SK-N-SH (cell line): ENCODE measurements at regions of chr2 and their contacts with region 1.

Region 1: DNA sequence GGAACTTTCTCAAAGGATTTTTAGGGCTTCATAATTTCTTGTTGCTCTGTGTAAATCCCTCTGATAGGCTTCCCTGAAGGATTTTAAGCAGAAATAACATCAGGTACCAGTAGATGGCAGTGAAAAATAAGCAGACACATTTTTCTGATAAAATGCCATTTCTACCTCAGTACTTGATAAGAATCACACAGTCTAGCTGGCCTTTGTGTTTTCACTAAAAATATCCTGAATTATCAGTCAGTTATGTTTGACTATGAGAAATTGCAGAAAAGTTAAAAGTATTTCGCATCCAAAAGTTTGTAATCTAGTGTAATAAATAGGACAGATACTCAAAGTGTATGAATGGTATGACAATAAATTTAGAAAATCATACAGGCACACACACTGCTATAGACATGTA is 68.7 kb downstream of the DNAJC10 start:
- DNase-seq: peak; percentile 37
- H3K4me3 ChIP-seq: no peak overlapping the region; a peak in 1 of 4 replicates
- H3K27ac ChIP-seq: no peak overlapping the region
- H3K4me1 ChIP-seq: peaks cover 0 to 4% of the 10 kb centered on the region in 2 experiments; a peak in 1 of 4 replicates
- H3K27me3 ChIP-seq: no peaks in the 10 kb centered on the region
- CTCF ChIP-seq: peak; percentile 77
- EP300 ChIP-seq: no peak
- RAD21 ChIP-seq: peak; percentile 92

Region 2: GRCh38 chr2:182763311-182763912 is 21.4 kb before region 1 on chr2:
- CTCF ChIA-PET with region 1: interaction called, 16 read pairs
- POLR2A ChIA-PET with region 1: no interaction called
- DNase-seq: peak; percentile 19
- H3K4me3 ChIP-seq: no peak overlapping the region
- H3K27ac ChIP-seq: no peak overlapping the region
- H3K4me1 ChIP-seq: no peaks in the 10 kb centered on the region
- H3K27me3 ChIP-seq: no peaks in the 10 kb centered on the region
- CTCF ChIP-seq: peak; percentile 65
- EP300 ChIP-seq: no peak
- RAD21 ChIP-seq: peak; percentile 55

Region 3: DNA sequence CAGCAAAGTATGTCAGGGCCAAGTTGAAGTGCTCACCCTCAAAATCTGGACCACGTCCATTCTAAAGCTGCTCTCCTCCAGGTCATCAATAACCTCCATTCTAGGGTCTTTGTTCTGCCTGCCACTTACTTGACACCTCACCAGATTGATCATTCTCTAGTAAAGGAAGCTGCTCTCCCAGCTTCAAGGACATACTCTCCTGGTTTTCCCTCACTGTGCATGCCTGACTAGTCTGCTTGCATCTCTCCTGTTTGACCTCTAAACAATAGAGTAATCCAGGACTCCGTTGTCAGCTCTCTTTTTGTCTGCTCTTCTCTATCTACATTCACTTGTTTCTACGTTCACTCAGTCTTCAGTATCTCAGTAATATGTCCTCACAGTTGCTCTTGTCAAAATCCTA is 22.5 kb after region 1 on chr2:
- CTCF ChIA-PET with region 1: interaction called, 19 read pairs
- POLR2A ChIA-PET with region 1: no interaction called
- DNase-seq: no peak
- H3K4me3 ChIP-seq: no peak overlapping the region
- H3K27ac ChIP-seq: no peak overlapping the region
- H3K4me1 ChIP-seq: no peaks in the 10 kb centered on the region
- H3K27me3 ChIP-seq: no peaks in the 10 kb centered on the region
- CTCF ChIP-seq: no peak
- EP300 ChIP-seq: no peak
- RAD21 ChIP-seq: no peak

Region 4: DNA sequence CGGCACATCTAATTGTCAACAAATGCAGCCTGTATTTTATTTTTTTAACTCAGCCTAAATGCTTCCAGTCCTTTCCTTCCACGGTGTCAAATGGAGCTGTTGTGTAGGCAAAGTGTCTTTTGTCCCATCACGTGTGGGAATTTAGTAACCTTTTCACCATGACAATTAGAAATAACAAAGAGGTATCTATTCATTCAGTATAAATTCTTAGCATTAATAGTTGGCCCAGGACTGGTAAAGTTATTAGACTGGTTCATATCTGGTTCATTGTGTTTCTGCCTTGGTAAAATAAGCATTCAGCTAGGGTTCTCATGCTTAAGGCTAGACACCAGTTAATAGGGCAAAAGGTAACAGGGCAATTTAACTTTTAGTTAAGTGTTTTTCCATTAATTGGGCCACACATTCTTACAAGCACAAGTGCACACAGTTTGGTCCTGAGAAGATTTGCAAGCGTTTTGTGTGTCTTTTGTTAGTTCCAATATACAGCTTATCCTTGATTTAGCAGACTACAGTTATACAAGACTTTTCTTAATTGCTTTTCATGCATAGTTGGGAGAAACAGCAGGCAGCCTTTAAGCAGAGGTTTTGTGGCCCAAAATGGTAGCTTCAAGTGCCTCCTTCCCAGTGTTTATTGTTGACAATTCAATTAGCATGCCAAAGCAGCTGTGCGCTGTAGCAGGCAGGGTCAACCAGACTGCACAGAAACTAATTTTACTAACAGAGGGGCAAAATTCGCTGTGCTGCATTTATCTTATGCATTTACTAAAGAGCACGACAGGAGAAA is 34.0 kb after region 1 on chr2:
- CTCF ChIA-PET with region 1: interaction called, 10 read pairs
- POLR2A ChIA-PET with region 1: no interaction called
- DNase-seq: peak; percentile 2
- H3K4me3 ChIP-seq: no peak overlapping the region
- H3K27ac ChIP-seq: peak overlapping the region in 1 of 2 experiments; percentile 18; a peak in 1 of 4 replicates
- H3K4me1 ChIP-seq: peaks cover 2 to 7% of the 10 kb centered on the region in 2 experiments; a peak in 3 of 4 replicates
- H3K27me3 ChIP-seq: no peaks in the 10 kb centered on the region
- CTCF ChIP-seq: no peak
- EP300 ChIP-seq: no peak
- RAD21 ChIP-seq: no peak

Region 5: GRCh38 chr2:182866461-182867406 is 82.0 kb after region 1 on chr2 and contains the start of gene FRZB:
- CTCF ChIA-PET with region 1: interaction called, 29 read pairs
- POLR2A ChIA-PET with region 1: no interaction called
- DNase-seq: peak; percentile 84
- H3K4me3 ChIP-seq: peak within 1 kb of the TSS; percentile 45 to 61
- H3K27ac ChIP-seq: peak within 1 kb of the TSS; percentile 31 to 77; a peak in 3 of 4 replicates
- H3K4me1 ChIP-seq: peaks cover 0 to 35% of the 10 kb centered on the region in 2 experiments; a peak in 3 of 4 replicates
- H3K27me3 ChIP-seq: no peaks in the 10 kb centered on the region
- CTCF ChIP-seq: no peak
- EP300 ChIP-seq: no peak
- RAD21 ChIP-seq: no peak
- polyA plus RNA-seq, gene FRZB: 2.8 and 3.5 TPM in 2 replicates